HCT116 (cell line): ENCODE measurements at regions of chr14 and their contacts with region 1.

Region 1: GRCh38 chr14:24366721-24367513 is 1.1 kb upstream of the NFATC4 start:
- DNase-seq: peak; percentile 97
- ATAC-seq: peak; percentile 77
- H3K4me3 ChIP-seq: peak overlapping the region; percentile 55 to 64
- H3K27ac ChIP-seq: peak overlapping the region; percentile 89
- H3K4me1 ChIP-seq: peaks cover 15 to 33% of the 10 kb centered on the region in 2 experiments
- H3K27me3 ChIP-seq: no peaks in the 10 kb centered on the region
- CTCF ChIP-seq: no peak
- POLR2A ChIP-seq: no peak
- RAD21 ChIP-seq: no peak

Region 2: DNA sequence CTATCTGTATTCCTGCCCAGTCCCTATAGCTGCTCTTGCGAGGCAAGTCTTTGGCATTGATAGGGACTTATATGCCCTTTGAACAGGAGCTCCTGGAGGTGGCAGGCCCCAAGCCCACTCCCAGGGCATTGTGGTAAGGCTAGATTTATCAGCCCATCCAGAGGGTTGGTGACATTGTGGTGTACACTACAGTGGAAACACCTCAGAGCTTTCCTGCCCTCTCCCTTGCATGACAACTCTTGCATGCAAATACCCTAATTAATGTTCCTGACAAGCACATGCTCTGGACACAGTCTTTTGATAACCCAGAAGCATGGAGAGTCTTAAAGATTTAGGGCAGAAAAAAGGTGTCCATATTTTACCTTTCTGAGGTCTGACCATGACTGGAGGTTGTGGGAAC is 26.3 kb before region 1 on chr14:
- CTCF ChIA-PET with region 1: no interaction called
- POLR2A ChIA-PET with region 1: no interaction called
- RAD21 ChIA-PET with region 1: no interaction called
- intact Hi-C with region 1: no loop called
- DNase-seq: no peak
- ATAC-seq: no peak
- H3K4me3 ChIP-seq: no peak overlapping the region
- H3K27ac ChIP-seq: no peak overlapping the region
- H3K4me1 ChIP-seq: no peaks in the 10 kb centered on the region
- H3K27me3 ChIP-seq: no peaks in the 10 kb centered on the region
- CTCF ChIP-seq: no peak
- POLR2A ChIP-seq: no peak
- RAD21 ChIP-seq: no peak

Region 3: DNA sequence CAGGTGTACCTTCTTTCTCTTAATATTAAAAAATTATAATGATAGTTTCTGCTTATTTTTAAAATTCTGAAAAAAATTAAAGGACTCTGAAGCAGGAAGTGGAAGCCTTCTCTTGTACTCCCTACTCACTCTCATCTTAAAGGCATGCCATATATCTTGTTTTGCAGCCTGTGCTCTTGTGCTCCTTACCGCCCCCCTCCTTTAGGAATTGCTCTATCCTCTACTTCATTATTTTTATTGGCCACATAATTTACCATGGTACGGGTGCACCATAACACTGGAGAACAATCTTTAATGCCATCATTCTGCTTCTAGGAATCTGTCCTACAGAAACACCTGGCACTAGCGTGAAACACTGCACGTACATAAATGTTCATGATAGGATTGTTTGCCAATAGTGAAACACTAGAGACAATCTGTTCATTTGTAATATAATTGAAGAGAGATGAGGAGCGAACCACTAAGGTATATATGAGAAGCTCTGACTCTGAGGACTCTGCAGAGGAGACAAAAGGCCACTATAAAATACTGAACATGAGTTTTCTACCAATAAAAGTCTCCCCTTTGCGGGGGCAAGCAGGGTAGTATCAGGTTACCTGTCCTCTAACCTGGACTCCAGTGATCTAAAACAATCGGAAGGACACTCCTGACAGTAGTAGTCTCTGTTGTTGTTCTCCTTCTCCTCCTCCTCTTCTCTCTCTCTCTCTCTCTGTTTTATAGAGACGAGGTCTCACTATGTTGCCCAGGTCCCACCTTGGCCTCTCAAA is 25.6 kb after region 1 on chr14:
- CTCF ChIA-PET with region 1: no interaction called
- POLR2A ChIA-PET with region 1: interaction called, 3 read pairs
- RAD21 ChIA-PET with region 1: no interaction called
- intact Hi-C with region 1: loop called (anchors 1 kb)
- DNase-seq: peak; percentile 62
- ATAC-seq: peak; percentile 92
- H3K4me3 ChIP-seq: peak overlapping the region; percentile 37 to 56
- H3K27ac ChIP-seq: peak overlapping the region; percentile 74
- H3K4me1 ChIP-seq: peaks cover 20 to 29% of the 10 kb centered on the region in 2 experiments
- H3K27me3 ChIP-seq: no peaks in the 10 kb centered on the region
- CTCF ChIP-seq: peak; percentile 25 to 45 (median 26); a peak in 4 of 6 replicates
- POLR2A ChIP-seq: no peak
- RAD21 ChIP-seq: no peak

Region 4: DNA sequence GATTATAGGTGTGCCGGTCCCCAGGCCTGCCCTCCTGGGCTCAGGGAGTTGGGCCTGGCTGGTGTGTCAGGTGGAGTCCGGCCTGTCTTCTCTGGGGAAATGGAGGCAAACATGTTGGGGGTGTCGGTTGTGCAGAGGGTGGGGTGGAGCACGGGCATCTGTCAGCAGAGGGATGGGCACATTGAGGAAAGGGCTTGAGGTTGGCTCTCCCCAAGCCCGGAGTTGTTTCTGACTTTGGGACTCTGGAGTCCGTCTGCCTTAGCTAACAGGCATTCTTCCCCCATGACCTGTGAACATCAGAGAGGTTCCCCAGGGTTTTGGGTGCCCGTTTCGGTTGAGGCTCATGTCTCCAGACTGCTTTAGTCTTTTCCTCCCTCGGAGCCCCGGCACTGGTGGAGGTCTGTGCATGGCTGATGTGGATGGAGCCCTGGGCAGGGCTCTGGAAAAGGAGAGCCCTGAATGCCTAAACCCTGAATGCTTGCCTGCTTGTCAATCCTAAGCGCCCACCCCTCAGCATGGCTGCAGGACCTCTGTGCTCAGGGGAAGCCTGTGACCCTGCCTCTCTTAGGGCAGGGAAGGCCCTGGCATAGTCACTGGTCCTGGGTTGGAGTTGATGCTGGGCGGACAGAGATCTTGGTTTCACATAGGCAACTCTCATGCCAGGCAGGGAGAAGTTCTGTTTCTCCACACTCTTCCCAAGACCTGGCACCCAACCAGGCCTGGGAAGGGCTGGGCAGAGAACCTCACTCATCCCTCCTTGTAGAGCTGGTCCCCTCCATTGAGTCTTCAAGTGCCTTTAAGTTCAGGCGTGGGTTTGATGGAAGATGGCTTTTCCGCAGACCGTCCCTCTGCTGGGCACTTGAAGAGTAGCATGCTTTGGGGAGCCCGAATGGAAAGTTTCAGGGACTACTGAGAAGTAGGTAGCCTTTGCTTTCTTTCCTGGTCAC is 44.8 kb after region 1 on chr14:
- CTCF ChIA-PET with region 1: no interaction called
- POLR2A ChIA-PET with region 1: no interaction called
- RAD21 ChIA-PET with region 1: no interaction called
- intact Hi-C with region 1: loop called (anchors 1 kb)
- DNase-seq: peak; percentile 51
- ATAC-seq: peak; percentile 92
- H3K4me3 ChIP-seq: no peak overlapping the region
- H3K27ac ChIP-seq: no peak overlapping the region
- H3K4me1 ChIP-seq: no peaks in the 10 kb centered on the region
- H3K27me3 ChIP-seq: no peaks in the 10 kb centered on the region
- CTCF ChIP-seq: peak; percentile 79 to 84 (median 81)
- POLR2A ChIP-seq: no peak
- RAD21 ChIP-seq: peak; percentile 61

Region 5: GRCh38 chr14:24442273-24443052 is 75.5 kb after region 1 on chr14 and contains the start of gene SDR39U1:
- CTCF ChIA-PET with region 1: interaction called, 11 read pairs
- POLR2A ChIA-PET with region 1: interaction called, 6 read pairs
- RAD21 ChIA-PET with region 1: no interaction called
- intact Hi-C with region 1: no loop called
- DNase-seq: peak; percentile 97
- ATAC-seq: peak; percentile 88
- H3K4me3 ChIP-seq: peak within 1 kb of the TSS; percentile 76 to 94
- H3K27ac ChIP-seq: peak within 1 kb of the TSS; percentile 96
- H3K4me1 ChIP-seq: peaks cover 5 to 17% of the 10 kb centered on the region in 2 experiments; a peak in 3 of 4 replicates
- H3K27me3 ChIP-seq: no peaks in the 10 kb centered on the region
- CTCF ChIP-seq: no peak
- POLR2A ChIP-seq: peak; percentile 88
- RAD21 ChIP-seq: no peak
- total RNA-seq, gene SDR39U1: 61.8 TPM

Region 6: DNA sequence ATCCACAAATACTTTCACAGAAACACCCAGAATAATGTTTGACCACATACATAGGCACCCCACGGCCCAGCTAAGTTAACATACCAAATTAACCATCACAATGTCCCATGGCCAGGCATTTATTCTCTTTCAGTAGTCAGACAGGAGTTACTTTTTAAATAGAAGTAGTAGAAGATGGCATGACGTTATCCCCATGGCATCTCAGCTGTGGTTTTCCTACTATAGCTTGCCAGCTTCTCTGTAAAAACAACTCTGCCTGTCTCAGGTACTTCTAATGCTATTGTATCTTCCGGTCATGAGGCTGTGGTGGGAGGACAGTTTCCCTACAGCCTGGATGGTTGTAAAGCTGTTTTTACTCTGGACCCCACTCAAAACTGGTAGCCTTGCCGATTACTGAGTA is 189.8 kb after region 1 on chr14:
- CTCF ChIA-PET with region 1: no interaction called
- POLR2A ChIA-PET with region 1: no interaction called
- RAD21 ChIA-PET with region 1: no interaction called
- intact Hi-C with region 1: no loop called
- DNase-seq: no peak
- ATAC-seq: no peak
- H3K4me3 ChIP-seq: no peak overlapping the region
- H3K27ac ChIP-seq: no peak overlapping the region
- H3K4me1 ChIP-seq: peaks cover 0 to 2% of the 10 kb centered on the region in 2 experiments; a peak in 1 of 4 replicates
- H3K27me3 ChIP-seq: 0 out of 2 replicates have a peak, but pooled peaks cover 5% of the 10 kb centered on the region
- CTCF ChIP-seq: no peak
- POLR2A ChIP-seq: no peak
- RAD21 ChIP-seq: no peak